Motor neuron (in vitro differentiated cells): ENCODE measurements at regions of chr1 and their contacts with region 1.

Region 1: GRCh38 chr1:94061513-94062443 is 59.2 kb downstream of the ABCA4 start:
- ATAC-seq: peak; percentile 70 to 96 (median 85)
- H3K4me3 ChIP-seq: no peak overlapping the region
- H3K27ac ChIP-seq: no peak overlapping the region
- H3K4me1 ChIP-seq: no peaks in the 10 kb centered on the region

Region 2: GRCh38 chr1:94237291-94238226 is 175.8 kb after region 1 on chr1 and contains the start of gene ARHGAP29:
- in situ Hi-C with region 1: loop called in 4 of 9 experiments (anchors 25 kb)
- ATAC-seq: peak; percentile 87 to 98 (median 96)
- H3K4me3 ChIP-seq: peak within 1 kb of the TSS; percentile 57 to 77 (median 68)
- H3K27ac ChIP-seq: no peak within 1 kb of the TSS
- H3K4me1 ChIP-seq: peaks cover 3 to 7% of the 10 kb centered on the region in 2 donors
- total RNA-seq, gene ARHGAP29: 0.52 to 121 (median 3.3) TPM

Region 3: DNA sequence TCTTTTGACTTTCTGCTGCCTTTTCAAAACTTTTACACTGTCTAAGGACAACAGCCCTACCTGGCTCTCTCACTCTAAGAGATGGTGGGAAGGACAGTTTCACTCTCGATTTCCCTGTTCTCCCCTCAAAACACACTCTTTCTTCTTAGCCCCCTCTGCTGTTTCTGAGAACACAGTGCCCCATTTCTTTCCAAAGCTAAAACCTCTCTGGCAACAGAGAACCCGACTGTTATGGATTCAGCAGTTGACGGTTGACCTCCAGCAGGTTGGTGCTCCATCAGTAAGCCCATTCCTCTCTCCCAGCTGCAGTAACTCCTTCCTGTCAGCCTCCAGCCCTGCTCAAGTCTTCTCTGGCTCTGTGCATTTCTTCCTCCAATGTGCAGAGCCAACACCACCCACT is 268.2 kb after region 1 on chr1:
- in situ Hi-C with region 1: loop called in 4 of 9 experiments (anchors 5 to 25 kb)
- ATAC-seq: peak in 2 of 8 experiments; percentile 14 to 18
- H3K4me3 ChIP-seq: no peak overlapping the region
- H3K27ac ChIP-seq: no peak overlapping the region
- H3K4me1 ChIP-seq: peaks cover 5 to 9% of the 10 kb centered on the region in 2 donors

Region 4: DNA sequence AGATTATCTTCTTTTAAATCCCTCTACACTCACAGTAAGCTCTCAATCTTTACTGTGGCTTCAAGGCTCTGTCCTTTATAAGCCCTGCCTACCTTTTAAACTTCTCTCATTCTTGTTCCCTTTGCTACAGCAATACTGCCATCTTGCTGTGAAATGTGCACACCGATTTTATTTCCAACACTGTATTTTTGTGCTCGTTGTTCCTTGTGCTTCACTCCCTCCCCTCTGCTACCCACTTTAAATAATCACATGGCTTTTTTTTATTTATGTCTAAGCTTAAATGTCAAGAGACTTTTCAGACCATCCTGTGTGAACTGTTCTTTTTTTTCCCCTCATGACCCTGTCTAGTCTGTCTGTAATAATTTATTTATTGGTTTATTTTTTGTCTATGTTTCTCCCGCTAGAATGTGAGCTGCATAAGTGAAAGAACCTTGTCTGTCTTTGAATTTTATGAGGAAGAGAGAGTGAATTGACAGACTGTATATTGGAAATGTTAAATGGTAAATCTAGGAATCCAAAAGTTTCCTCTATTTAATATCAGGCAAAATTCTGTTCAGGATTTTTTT is 402.1 kb after region 1 on chr1:
- in situ Hi-C with region 1: loop called in 2 of 9 experiments (anchors 25 kb)
- ATAC-seq: peak in 3 of 8 experiments; percentile 79 to 91 (median 86)
- H3K4me3 ChIP-seq: no peak overlapping the region
- H3K27ac ChIP-seq: no peak overlapping the region
- H3K4me1 ChIP-seq: no peaks in the 10 kb centered on the region